AG04449 (cell line): ENCODE measurements at regions of chr1 and their contacts with region 1.

Region 1: GRCh38 chr1:12275369-12275768 is 45.5 kb downstream of the VPS13D start:
- DNase-seq: no peak
- H3K4me3 ChIP-seq: no peak overlapping the region
- CTCF ChIP-seq: peak; percentile 78

Region 2: DNA sequence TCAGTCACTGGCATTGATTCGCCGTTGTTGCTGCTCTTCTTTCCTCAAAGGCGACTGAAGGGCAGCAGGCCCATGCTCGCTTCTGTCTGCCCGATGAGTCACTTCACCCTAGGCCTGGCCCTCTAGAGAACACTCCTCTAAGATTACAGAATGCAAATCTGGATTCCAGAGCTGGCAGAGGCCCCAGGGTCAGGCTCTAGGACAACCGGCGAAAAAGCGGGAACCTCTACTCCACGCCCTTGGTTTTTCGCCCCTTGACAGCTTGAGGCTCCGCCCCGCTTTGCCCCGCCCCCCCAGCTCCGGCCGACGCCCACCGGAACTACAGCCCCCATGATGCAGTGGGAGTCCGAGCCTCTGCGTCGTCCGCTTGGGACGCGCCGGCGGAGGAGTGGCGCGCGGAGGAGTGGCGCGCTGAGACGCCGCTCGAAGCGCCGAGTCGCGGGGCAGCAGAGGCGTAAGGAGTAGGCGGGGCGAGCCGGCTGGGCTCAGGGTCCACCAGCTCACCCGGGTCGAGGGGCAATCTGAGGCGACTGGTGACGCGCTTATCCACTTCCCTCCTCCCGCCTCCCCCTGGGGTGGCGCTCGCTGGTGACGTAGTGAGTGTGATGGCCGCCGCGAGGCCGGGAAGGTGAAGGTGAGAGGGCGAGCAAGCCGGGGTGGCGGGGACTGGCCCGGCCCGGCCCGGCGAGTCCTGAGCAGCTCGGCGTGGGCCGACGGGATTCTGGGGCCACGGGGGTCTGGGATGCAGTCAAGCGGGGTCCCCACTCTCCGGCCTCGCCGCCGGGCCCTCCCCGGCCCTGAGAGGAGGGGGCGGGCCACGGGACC is 295.3 kb before region 1 on chr1 and contains the start of gene MFN2:
- CTCF ChIA-PET with region 1: no interaction called
- POLR2A ChIA-PET with region 1: no interaction called
- DNase-seq: peak; percentile 64
- H3K4me3 ChIP-seq: peak within 1 kb of the TSS; percentile 94
- CTCF ChIP-seq: no peak

Region 3: DNA sequence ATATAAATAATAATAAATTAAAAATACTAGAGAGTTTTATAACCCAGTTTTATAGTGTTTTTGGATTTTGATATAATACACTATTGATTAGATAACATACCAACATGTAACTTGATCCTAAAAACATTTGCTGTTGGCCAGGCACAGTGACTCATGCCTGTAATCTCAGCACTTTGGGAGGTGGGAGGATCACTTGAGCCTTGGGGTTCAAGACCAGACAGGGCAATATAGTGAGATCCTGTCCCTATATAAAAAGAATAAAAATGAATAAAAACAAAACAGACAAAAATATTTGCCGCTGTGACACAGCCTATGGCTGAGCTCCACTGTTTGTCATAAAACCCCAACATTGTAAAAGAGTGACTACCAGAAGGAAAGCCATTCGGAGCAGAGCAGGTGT is 19.5 kb before region 1 on chr1:
- CTCF ChIA-PET with region 1: interaction called, 84 read pairs
- POLR2A ChIA-PET with region 1: no interaction called
- DNase-seq: no peak
- H3K4me3 ChIP-seq: no peak overlapping the region
- CTCF ChIP-seq: no peak

Region 4: GRCh38 chr1:12296623-12297022 is 21.3 kb after region 1 on chr1:
- CTCF ChIA-PET with region 1: interaction called, 52 read pairs
- POLR2A ChIA-PET with region 1: no interaction called
- DNase-seq: peak; percentile 56
- H3K4me3 ChIP-seq: no peak overlapping the region
- CTCF ChIP-seq: no peak

Region 5: GRCh38 chr1:12314333-12314903 is 39.0 kb after region 1 on chr1:
- CTCF ChIA-PET with region 1: interaction called, 11 read pairs
- POLR2A ChIA-PET with region 1: no interaction called
- DNase-seq: no peak
- H3K4me3 ChIP-seq: no peak overlapping the region
- CTCF ChIP-seq: no peak